ENCODE measurements at regions of chr14 and their contacts with region 1.

Region 1: DNA sequence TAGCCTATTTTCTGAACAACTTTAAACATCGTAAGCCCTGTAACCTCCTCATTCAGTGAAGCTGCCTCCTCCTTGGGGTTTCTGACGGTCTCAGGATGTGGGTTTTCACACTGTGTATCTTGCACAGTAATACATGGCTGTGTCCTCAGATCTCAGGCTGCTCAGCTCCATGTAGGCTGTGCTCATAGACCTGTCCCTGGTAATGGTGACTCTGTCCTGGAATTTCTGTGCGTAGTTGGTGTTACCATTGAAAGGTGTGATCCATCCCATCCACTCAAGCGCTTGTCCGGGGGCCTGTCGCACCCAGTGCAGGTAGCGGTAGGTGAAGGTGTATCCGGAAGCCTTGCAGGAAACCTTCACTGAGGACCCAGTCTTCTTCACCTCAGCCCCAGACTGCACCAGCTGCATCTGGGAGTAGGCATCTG is 980.5 kb downstream of the TMEM121 start:
- DNase-seq: peak; percentile 28 to 86 (median 45)
- ATAC-seq: peak; percentile 65
- H3K4me3 ChIP-seq: peak overlapping the region; percentile 36
- H3K4me3 Mint-ChIP-seq: peak overlapping the region; percentile 85
- H3K27ac ChIP-seq: peak overlapping the region; percentile 64 to 82
- H3K27ac Mint-ChIP-seq: peak overlapping the region; percentile 98
- H3K4me1 ChIP-seq: peaks cover 69% of the 10 kb centered on the region
- H3K4me1 Mint-ChIP-seq: peaks cover 71% of the 10 kb centered on the region
- H3K27me3 ChIP-seq: no peaks in the 10 kb centered on the region
- H3K27me3 Mint-ChIP-seq: no peaks in the 10 kb centered on the region
- CTCF ChIP-seq: no peak

Region 2: GRCh38 chr14:106174206-106174605 is 332.7 kb before region 1 on chr14:
- CTCF ChIA-PET with region 1: no interaction called
- POLR2A ChIA-PET with region 1: no interaction called
- intact Hi-C with region 1: loop called in 1 of 2 experiments (anchors 2 kb)
- DNase-seq: peak; percentile 42 to 92 (median 63)
- ATAC-seq: peak; percentile 71
- H3K4me3 ChIP-seq: peak overlapping the region; percentile 10
- H3K4me3 Mint-ChIP-seq: peak overlapping the region; percentile 42
- H3K27ac ChIP-seq: peak overlapping the region in 1 of 2 donors; percentile 72
- H3K27ac Mint-ChIP-seq: peak overlapping the region; percentile 93
- H3K4me1 ChIP-seq: peaks cover 41% of the 10 kb centered on the region
- H3K4me1 Mint-ChIP-seq: peaks cover 81% of the 10 kb centered on the region
- H3K27me3 ChIP-seq: no peaks in the 10 kb centered on the region
- H3K27me3 Mint-ChIP-seq: no peaks in the 10 kb centered on the region
- CTCF ChIP-seq: no peak

Region 3: GRCh38 chr14:106417224-106418049 is 89.5 kb before region 1 on chr14:
- CTCF ChIA-PET with region 1: interaction called, 25 read pairs
- POLR2A ChIA-PET with region 1: no interaction called
- intact Hi-C with region 1: no loop called
- DNase-seq: peak; percentile 38 to 90 (median 74)
- ATAC-seq: peak; percentile 61
- H3K4me3 ChIP-seq: no peak overlapping the region
- H3K4me3 Mint-ChIP-seq: no peak overlapping the region
- H3K27ac ChIP-seq: no peak overlapping the region
- H3K27ac Mint-ChIP-seq: peak overlapping the region; percentile 56
- H3K4me1 ChIP-seq: peaks cover 7% of the 10 kb centered on the region
- H3K4me1 Mint-ChIP-seq: peaks cover 15% of the 10 kb centered on the region
- H3K27me3 ChIP-seq: no peaks in the 10 kb centered on the region
- H3K27me3 Mint-ChIP-seq: peaks cover 10% of the 10 kb centered on the region
- CTCF ChIP-seq: peak; percentile 77

Region 4: GRCh38 chr14:106556665-106557289 is 49.9 kb after region 1 on chr14:
- CTCF ChIA-PET with region 1: no interaction called
- POLR2A ChIA-PET with region 1: no interaction called
- intact Hi-C with region 1: no loop called
- DNase-seq: peak; percentile 65 to 82 (median 70)
- ATAC-seq: peak; percentile 66
- H3K4me3 ChIP-seq: no peak overlapping the region
- H3K4me3 Mint-ChIP-seq: no peak overlapping the region
- H3K27ac ChIP-seq: no peak overlapping the region
- H3K27ac Mint-ChIP-seq: no peak overlapping the region
- H3K4me1 ChIP-seq: peaks cover 5% of the 10 kb centered on the region
- H3K4me1 Mint-ChIP-seq: no peaks in the 10 kb centered on the region
- H3K27me3 ChIP-seq: peaks cover 3 to 9% of the 10 kb centered on the region in 2 experiments
- H3K27me3 Mint-ChIP-seq: peaks cover 13% of the 10 kb centered on the region
- CTCF ChIP-seq: peak; percentile 96